ENCODE measurements at regions of chr11 and their contacts with region 1.

Region 1: GRCh38 chr11:61639816-61640443 is 40.3 kb upstream of the DAGLA start:
- DNase-seq: no peak
- H3K4me3 ChIP-seq: no peak overlapping the region
- H3K27ac ChIP-seq: no peak overlapping the region
- H3K4me1 ChIP-seq: peaks cover 5% of the 10 kb centered on the region
- H3K27me3 ChIP-seq: peaks cover 42% of the 10 kb centered on the region
- CTCF ChIP-seq: no peak

Region 2: DNA sequence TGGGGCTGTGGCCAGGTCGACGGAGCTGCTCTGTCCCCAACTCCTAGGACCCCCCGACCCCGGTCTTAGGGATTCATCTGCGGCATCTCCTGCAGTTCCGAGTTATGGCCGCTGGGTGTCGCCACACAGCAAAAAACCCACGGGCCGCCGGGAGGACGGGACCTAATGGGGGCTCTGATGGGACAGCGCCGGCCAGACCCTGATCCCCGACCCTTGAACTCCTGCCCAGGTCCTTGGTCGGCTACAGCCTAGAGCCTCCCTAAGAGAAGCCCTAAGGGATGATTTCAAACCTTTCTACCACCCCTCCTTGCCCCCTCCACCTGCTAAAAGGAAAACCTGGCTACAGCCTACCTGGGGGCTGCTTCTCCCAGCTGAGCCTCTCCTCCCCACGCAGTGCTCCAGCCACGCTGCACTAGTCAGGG is 162.2 kb before region 1 on chr11:
- intact Hi-C with region 1: loop called (anchors 5 kb)
- DNase-seq: peak; percentile 60
- H3K4me3 ChIP-seq: no peak overlapping the region
- H3K27ac ChIP-seq: peak overlapping the region; percentile 71
- H3K4me1 ChIP-seq: peaks cover 42% of the 10 kb centered on the region
- H3K27me3 ChIP-seq: peaks cover 4% of the 10 kb centered on the region
- CTCF ChIP-seq: peak; percentile 94

Region 3: GRCh38 chr11:61587521-61588453 is 52.1 kb before region 1 on chr11:
- intact Hi-C with region 1: no loop called
- DNase-seq: peak; percentile 72
- H3K4me3 ChIP-seq: peak overlapping the region; percentile 71
- H3K27ac ChIP-seq: peak overlapping the region; percentile 87
- H3K4me1 ChIP-seq: peaks cover 30% of the 10 kb centered on the region
- H3K27me3 ChIP-seq: no peaks in the 10 kb centered on the region
- CTCF ChIP-seq: peak; percentile 52